Motor neuron (in vitro differentiated cells): ENCODE measurements at regions of chr15 and their contacts with region 1.

Region 1: GRCh38 chr15:57861036-57861638 is 154.6 kb downstream of the POLR2M start:
- ATAC-seq: peak in 3 of 8 experiments; percentile 36 to 59 (median 42)
- H3K4me3 ChIP-seq: no peak overlapping the region
- H3K27ac ChIP-seq: no peak overlapping the region
- H3K4me1 ChIP-seq: peaks cover 0 to 10% of the 10 kb centered on the region in 2 donors

Region 2: GRCh38 chr15:57476533-57476975 is 384.6 kb before region 1 on chr15:
- in situ Hi-C with region 1: no loop called
- ATAC-seq: no peak
- H3K4me3 ChIP-seq: no peak overlapping the region
- H3K27ac ChIP-seq: no peak overlapping the region
- H3K4me1 ChIP-seq: peaks cover 0 to 7% of the 10 kb centered on the region in 2 donors

Region 3: DNA sequence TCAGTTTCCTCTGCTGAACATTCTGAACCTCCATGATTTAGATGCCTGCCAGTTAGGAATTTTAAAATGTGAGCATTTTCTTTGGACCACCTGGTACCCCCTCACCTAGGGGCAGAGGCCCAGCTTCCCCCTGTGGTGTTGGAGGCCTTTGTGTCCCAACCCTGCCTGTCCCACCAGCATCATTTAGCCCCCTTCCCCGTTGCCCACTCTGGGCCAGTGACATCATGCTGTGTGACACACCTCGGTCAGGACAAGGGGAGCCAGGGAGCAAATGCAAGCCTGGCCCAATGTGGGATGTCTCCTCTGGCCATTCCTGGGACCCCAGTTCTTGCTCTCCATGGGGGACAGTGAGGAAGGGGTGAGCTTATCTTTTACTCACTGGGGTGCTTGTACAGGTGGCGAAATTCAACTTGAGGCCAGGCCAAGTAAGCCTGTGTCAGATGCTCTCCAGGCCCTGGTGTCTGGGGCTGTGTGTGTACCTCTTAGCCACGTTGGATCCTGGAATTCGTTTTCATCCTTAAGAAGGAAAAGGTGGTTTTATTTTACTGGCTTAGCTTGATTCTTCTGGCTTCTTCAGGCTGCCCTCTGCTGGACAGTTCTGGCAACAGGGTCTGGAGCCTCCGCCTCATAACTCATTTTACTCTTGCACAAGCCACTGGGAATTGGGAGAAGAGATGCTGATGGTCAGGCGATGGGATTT is 319.2 kb before region 1 on chr15:
- in situ Hi-C with region 1: no loop called
- ATAC-seq: peak; percentile 32 to 86 (median 69)
- H3K4me3 ChIP-seq: no peak overlapping the region
- H3K27ac ChIP-seq: no peak overlapping the region
- H3K4me1 ChIP-seq: peaks cover 2 to 18% of the 10 kb centered on the region in 2 donors

Region 4: DNA sequence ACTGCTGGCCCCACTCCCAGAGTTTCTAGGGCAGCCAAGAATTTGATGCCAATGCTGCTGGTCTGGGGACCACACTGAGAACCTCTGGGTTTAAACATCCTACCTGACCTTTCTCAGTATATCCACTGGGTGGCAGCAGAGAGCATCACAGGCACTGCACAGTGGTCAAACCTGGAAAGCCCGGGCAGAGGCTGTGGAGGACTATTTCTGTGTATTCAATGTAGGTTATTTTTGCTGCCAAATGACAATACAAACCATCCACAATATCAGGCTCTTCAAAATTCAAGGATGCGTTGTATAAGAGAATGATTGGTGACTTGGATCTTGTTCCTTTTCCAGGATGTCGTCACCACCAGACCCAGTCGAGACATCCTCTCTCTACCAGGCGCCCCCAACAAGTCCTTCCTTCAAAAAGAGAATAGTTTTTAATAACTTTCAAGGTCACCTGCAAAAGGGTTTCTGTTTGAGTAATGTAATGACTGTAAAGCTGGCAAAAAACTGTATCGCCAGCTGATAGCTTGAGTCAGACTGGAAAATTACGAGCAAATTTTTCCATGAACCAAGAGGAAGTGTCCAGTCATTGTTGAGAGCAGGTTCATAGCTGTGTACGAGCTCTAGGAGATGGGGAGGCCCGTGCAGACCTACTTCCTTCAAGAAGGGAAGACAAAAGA is 300.0 kb before region 1 on chr15:
- in situ Hi-C with region 1: loop called in 1 of 9 experiments (anchors 10 kb)
- ATAC-seq: peak; percentile 79 to 98 (median 94)
- H3K4me3 ChIP-seq: no peak overlapping the region
- H3K27ac ChIP-seq: no peak overlapping the region
- H3K4me1 ChIP-seq: no peaks in the 10 kb centered on the region

Region 5: DNA sequence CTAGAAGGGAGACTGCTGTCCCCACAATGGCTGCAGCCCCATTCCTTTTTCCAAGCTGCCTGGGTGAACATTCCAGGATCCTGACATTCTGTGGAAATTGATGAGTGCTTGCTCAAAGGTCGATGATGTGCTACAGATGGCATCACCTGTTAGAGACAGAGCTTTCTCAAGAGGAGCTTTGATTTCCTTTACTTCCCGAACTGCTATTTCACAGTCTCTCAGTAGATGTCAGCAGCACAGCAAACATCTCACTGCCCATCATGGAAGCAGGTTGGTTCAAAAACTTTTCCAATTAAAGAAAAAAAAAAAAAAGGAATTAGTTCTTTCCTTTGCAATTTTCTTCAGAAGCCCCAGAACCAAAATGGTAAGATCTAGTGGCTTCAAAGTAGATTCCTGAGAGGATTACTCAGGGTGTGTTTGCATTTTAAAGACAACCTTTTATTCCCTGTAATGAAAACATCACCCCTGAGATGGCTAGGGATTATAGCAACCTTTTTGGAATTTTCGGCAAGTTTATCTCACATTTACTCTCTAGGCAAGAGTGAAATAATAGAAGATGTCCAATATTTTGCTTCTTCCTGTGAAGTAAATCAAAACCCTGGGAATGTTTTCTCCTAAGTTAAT is 109.8 kb before region 1 on chr15:
- in situ Hi-C with region 1: loop called in 3 of 9 experiments (anchors 5 to 25 kb)
- ATAC-seq: peak in 6 of 8 experiments; percentile 32 to 62 (median 55)
- H3K4me3 ChIP-seq: no peak overlapping the region
- H3K27ac ChIP-seq: no peak overlapping the region
- H3K4me1 ChIP-seq: peaks cover 12 to 17% of the 10 kb centered on the region in 2 donors